ENCODE measurements at regions of chr4 and their contacts with region 1.

Region 1: GRCh38 chr4:53161051-53161786 is 204.6 kb downstream of the SCFD2 start:
- DNase-seq: no peak
- H3K4me3 ChIP-seq: no peak overlapping the region
- H3K27ac ChIP-seq: no peak overlapping the region
- H3K4me1 ChIP-seq: no peaks in the 10 kb centered on the region
- H3K27me3 ChIP-seq: no peaks in the 10 kb centered on the region
- CTCF ChIP-seq: no peak

Region 2: DNA sequence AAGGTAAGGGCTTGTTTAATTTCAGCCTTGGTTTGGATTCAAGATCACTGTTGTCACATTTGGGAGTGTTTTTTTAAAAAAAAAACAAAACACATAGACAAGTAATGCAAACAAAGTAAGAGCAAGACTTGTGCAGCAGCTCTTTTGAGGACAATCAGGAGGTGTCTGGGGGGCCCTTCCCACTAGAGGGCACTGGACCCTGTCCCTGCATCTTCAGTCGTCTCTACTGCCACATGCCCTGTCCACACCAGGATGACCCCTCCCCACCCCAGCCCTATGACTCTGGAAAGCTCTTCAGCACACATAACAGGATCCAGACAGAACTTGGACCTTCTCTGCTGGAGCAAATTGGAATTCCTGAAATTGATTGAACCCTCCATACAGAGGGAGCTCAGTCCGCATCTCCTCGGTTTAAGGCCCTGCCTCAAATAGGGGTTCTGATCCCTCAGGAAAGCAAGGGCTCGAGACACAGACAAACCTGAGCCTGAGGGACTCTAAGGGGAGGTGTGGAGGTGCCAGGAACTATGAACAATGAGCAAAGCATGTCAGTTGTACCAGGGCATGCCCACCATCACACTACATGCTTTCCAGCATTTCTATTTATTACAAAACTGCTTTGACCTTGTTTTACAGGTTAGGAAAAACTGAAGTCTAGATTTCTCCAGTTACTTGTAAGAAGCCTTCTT is 573.0 kb before region 1 on chr4:
- CTCF ChIA-PET with region 1: interaction called, 13 read pairs
- POLR2A ChIA-PET with region 1: no interaction called
- intact Hi-C with region 1: no loop called
- DNase-seq: peak in 1 of 2 experiments; percentile 5
- H3K4me3 ChIP-seq: no peak overlapping the region
- H3K27ac ChIP-seq: no peak overlapping the region
- H3K4me1 ChIP-seq: no peaks in the 10 kb centered on the region
- H3K27me3 ChIP-seq: no peaks in the 10 kb centered on the region
- CTCF ChIP-seq: peak; percentile 55